ENCODE measurements at regions of chr7 and their contacts with region 1.

Region 1: DNA sequence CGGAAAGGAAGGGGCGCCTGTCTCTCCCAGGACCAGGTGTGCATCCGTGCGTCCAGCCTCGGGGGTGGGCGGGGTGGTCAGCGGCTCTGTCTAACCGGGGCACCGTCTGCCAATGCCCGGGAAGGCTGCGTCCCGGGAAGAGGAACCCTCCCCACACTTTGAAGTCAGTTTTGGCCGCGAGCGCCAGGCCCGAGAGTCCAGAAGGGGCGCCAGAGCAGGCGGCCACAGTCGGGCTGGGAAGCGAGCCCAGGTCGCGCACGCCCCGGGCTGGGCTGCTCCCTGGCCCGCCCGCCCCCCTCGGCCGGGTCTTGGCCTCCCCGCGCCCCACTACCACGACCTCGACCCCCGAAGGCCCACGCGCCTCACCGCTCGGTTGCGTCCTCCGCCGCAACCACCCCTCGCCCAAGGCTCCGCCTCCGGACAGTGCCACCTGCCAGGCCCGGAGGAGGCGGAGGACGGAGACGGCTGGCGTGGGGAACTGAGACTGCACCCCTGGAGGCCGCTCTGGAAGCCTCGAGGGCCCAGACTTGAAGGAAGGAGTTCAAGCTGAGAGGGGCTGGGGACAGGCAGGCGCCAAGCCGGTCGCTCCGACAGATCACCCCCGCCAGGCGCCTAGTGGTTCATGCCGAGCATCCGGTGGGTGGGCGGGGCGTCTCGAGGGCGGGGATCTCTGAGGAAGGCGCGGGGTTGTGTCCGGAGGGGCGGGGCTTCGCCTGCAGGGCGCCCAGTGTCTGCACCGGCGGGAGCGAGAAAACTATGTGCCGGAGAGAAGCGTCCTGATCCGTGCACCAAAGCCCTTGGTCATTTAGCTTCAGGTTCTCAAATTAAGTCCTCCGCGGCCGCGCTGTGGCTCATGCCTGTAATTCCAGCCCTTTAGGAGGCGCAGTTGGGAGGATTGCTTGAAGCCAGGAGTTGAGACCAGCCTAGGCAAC is at the start of gene BRAT1:
- DNase-seq: peak; percentile 99
- H3K4me3 ChIP-seq: peak within 1 kb of the TSS; percentile 67 to 87
- H3K27ac ChIP-seq: peak within 1 kb of the TSS; percentile 94 to 98
- H3K4me1 ChIP-seq: peaks cover 33% of the 10 kb centered on the region
- H3K27me3 ChIP-seq: no peaks in the 10 kb centered on the region
- CTCF ChIP-seq: peak in 2 of 3 experiments; percentile 21 to 26
- POLR2A ChIP-seq: peak; percentile 40
- total RNA-seq, gene BRAT1: 104 to 108 TPM

Region 2: DNA sequence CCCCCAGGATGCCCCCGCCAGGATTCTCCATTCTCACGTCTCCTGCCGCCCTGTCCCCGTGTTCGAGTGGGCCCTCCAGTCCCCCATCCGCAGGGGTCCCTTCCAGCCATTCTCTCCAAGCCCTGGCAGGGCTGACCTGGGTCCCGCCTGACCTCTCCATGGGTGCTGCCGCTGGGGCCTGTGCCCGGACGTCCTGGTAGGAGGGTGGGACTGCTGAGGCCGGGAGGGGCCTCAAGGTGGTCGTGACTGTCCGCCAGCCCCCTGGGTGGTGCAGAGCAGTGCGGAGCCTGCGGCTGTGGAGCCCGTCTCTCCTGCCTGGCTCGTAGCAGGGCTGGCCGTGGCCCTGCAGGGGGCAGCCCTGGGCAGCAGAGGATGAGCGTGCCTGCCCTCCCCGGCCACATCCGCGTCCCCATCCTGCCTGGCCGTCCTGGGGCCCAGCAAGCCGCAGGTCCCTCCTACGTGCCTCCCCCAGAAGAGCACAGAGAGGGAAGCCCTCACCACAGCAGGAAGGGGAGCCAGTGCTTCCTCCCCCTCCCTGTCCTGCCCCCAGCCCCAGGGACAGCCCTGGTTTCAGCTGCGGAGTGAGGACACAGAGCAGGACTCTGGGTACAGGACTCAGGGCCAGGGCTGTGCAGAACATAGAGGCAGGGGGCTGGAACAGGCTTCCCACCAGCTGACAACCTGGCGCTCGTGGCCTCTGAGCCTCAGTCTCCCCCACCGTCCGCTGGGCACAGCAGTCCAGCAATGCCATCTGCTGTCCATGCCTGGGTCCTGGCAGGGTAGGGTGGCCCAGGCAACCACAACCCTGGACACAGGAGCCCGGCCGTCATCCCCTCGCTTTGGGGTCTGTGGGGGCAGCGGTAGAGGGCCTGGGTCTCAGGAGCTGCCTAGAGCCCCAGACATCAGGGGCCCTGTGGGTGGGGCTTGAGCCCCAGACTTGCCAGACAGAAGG is 77.7 kb before region 1 on chr7:
- intact Hi-C with region 1: loop called (anchors 10 kb)
- DNase-seq: peak; percentile 54
- H3K4me3 ChIP-seq: no peak overlapping the region
- H3K27ac ChIP-seq: no peak overlapping the region
- H3K4me1 ChIP-seq: peaks cover 19% of the 10 kb centered on the region
- H3K27me3 ChIP-seq: no peaks in the 10 kb centered on the region
- CTCF ChIP-seq: peak; percentile 55 to 64 (median 61)
- POLR2A ChIP-seq: no peak

Measured in testis (tissue), 5 donors.